CD8-positive, alpha-beta T cell (primary cell): ENCODE measurements at regions of chr22 and their contacts with region 1.

Region 1: DNA sequence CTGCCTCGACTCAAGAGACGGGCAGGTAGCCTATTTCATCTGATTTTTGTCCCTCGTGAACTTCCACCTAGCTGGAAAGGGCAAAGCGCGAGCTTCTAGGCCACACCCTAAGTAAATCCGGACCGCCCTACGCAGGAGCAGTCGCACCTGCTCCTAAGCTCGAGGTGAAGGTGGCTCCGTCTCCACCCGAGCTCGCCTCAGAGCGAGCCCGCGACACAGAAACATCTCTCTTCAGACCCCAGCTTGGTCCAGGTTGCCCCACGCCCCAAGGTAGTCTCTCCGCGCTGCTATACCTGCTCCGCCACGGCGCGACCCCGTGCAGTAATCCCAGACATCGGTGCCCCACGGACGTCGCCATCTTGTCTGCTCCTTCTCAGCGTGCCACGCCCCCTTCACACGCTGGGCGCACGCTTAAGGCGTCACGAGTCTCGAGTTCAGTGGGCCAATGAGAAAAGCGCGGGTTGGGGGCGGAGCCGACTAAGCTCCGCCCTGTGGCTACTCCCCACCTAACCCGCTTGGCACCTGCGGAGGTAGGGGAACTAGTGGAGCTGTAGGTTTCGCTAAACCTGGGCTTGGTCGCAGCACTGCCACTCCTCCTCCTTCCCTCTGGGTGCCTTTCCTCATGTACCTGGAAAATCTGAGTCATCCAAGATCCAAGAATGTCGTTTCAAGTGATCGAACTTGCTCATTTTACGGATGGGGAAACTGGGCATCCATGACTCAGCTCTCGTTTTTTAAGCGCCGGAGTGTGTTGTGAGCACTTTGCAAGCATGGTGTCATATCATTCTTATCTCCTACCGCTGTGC is at the start of gene PISD:
- DNase-seq: peak; percentile 94 to 98 (median 97)
- ATAC-seq: peak; percentile 94
- H3K4me3 ChIP-seq: peak within 1 kb of the TSS; percentile 89 to 97
- H3K4me3 Mint-ChIP-seq: peak within 1 kb of the TSS; percentile 96
- H3K27ac ChIP-seq: peak within 1 kb of the TSS; percentile 73 to 79
- H3K27ac Mint-ChIP-seq: peak within 1 kb of the TSS; percentile 96
- H3K4me1 ChIP-seq: peaks cover 18% of the 10 kb centered on the region
- H3K4me1 Mint-ChIP-seq: peaks cover 41% of the 10 kb centered on the region
- H3K27me3 ChIP-seq: no peaks in the 10 kb centered on the region
- H3K27me3 Mint-ChIP-seq: no peaks in the 10 kb centered on the region
- CTCF ChIP-seq: no peak
- total RNA-seq, gene PISD: 41.2 to 43.6 TPM

Region 2: DNA sequence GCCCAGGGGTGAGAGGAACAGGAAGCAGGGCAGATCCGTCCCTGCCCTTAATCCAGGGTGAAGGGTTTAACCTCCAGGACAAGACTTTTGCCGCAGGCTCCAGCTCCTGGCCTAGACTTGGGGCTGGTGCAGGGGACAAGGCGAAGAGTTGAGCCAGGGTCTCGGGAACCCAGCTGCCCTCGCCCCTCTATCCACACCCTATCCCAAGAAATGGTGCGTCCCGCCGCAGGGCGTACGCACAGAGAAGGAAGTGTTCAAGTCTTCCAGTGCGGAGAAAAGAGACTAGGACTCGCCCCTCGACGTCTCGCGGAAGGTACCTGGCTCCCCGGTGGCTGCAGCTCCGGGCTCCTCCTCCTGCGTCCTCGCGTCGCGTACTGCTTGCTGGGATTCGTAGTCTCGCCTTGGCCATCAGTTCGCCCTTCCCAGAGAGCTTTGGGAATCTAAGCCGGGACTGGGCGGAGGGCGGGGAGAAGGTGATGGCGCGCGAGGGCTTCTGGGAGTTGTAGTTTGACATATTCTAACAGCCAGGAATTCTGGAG is 1895.4 kb before region 1 on chr22 and contains the start of gene ZMAT5:
- CTCF ChIA-PET with region 1: no interaction called
- POLR2A ChIA-PET with region 1: no interaction called
- intact Hi-C with region 1: loop called in 1 of 2 experiments (anchors 10 kb)
- DNase-seq: peak; percentile 77 to 97 (median 92)
- ATAC-seq: peak; percentile 94
- H3K4me3 ChIP-seq: peak within 1 kb of the TSS; percentile 83 to 95
- H3K4me3 Mint-ChIP-seq: peak within 1 kb of the TSS; percentile 100
- H3K27ac ChIP-seq: peak within 1 kb of the TSS; percentile 72 to 84
- H3K27ac Mint-ChIP-seq: peak within 1 kb of the TSS; percentile 98
- H3K4me1 ChIP-seq: peaks cover 23% of the 10 kb centered on the region
- H3K4me1 Mint-ChIP-seq: peaks cover 41% of the 10 kb centered on the region
- H3K27me3 ChIP-seq: no peaks in the 10 kb centered on the region
- H3K27me3 Mint-ChIP-seq: no peaks in the 10 kb centered on the region
- CTCF ChIP-seq: no peak
- total RNA-seq, gene ZMAT5: 4.3 to 5.2 TPM

Region 3: DNA sequence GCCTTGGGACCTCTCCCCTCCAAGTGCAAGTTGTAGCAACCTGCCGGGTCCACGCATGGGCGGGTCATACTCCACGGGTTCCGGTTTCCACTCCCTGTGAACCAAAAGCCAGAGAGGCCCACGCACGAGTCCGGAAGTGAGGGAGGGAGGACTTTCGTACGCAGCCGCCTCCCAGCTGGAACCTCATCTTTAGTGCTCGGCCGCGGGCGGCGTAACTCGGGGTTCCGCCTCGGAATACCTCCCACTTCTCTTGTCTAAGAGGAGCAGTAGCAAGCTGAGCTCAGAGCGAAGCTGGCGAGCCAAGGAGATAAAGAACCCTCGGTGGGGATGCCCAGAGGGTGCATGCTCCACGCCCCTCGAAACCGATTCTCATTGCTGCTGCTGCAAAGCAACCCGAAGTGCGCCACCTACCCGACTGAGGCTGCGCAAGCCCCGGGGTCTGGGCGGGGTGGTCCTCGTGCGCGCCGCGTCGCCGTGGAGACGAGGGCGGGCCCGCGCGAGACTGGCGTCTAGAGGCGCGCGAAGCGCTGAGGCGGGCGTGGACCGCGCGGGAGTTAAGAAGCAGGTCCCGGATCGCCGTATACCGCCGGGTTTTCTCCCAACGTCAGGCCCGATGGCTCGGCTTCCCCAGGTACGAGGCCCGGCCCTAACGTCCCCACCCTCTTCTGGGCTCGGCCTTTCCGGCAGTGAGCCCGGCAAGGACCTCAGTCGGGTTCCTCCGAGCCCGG is 165.9 kb before region 1 on chr22 and contains the start of gene SFI1:
- CTCF ChIA-PET with region 1: interaction called, 5 read pairs
- POLR2A ChIA-PET with region 1: interaction called, 3 read pairs
- intact Hi-C with region 1: loop called in 1 of 2 experiments (anchors 10 kb)
- DNase-seq: peak; percentile 93 to 98 (median 96)
- ATAC-seq: peak; percentile 83
- H3K4me3 ChIP-seq: peak within 1 kb of the TSS; percentile 83 to 91
- H3K4me3 Mint-ChIP-seq: peak within 1 kb of the TSS; percentile 95
- H3K27ac ChIP-seq: peak within 1 kb of the TSS; percentile 87 to 90
- H3K27ac Mint-ChIP-seq: peak within 1 kb of the TSS; percentile 99
- H3K4me1 ChIP-seq: peaks cover 27% of the 10 kb centered on the region
- H3K4me1 Mint-ChIP-seq: peaks cover 45% of the 10 kb centered on the region
- H3K27me3 ChIP-seq: no peaks in the 10 kb centered on the region
- H3K27me3 Mint-ChIP-seq: no peaks in the 10 kb centered on the region
- CTCF ChIP-seq: no peak
- total RNA-seq, gene SFI1: 217 to 235 TPM

Region 4: GRCh38 chr22:31520051-31520450 is 142.0 kb before region 1 on chr22:
- CTCF ChIA-PET with region 1: no interaction called
- POLR2A ChIA-PET with region 1: no interaction called
- intact Hi-C with region 1: no loop called
- DNase-seq: no peak
- ATAC-seq: no peak
- H3K4me3 ChIP-seq: no peak overlapping the region
- H3K4me3 Mint-ChIP-seq: no peak overlapping the region
- H3K27ac ChIP-seq: no peak overlapping the region
- H3K27ac Mint-ChIP-seq: peak overlapping the region; percentile 77
- H3K4me1 ChIP-seq: peaks cover 3% of the 10 kb centered on the region
- H3K4me1 Mint-ChIP-seq: peaks cover 59% of the 10 kb centered on the region
- H3K27me3 ChIP-seq: no peaks in the 10 kb centered on the region
- H3K27me3 Mint-ChIP-seq: no peaks in the 10 kb centered on the region
- CTCF ChIP-seq: no peak

Region 5: GRCh38 chr22:31676700-31677099 is 14.6 kb after region 1 on chr22:
- CTCF ChIA-PET with region 1: interaction called, 48 read pairs
- POLR2A ChIA-PET with region 1: interaction called, 30 read pairs
- intact Hi-C with region 1: loop called (anchors 1 kb)
- DNase-seq: peak; percentile 82 to 95 (median 91)
- ATAC-seq: peak; percentile 100
- H3K4me3 ChIP-seq: peak overlapping the region; percentile 61 to 77
- H3K4me3 Mint-ChIP-seq: peak overlapping the region; percentile 90
- H3K27ac ChIP-seq: peak overlapping the region; percentile 80 to 83
- H3K27ac Mint-ChIP-seq: peak overlapping the region; percentile 94
- H3K4me1 ChIP-seq: peaks cover 4% of the 10 kb centered on the region
- H3K4me1 Mint-ChIP-seq: peaks cover 11% of the 10 kb centered on the region
- H3K27me3 ChIP-seq: no peaks in the 10 kb centered on the region
- H3K27me3 Mint-ChIP-seq: no peaks in the 10 kb centered on the region
- CTCF ChIP-seq: no peak

Region 6: GRCh38 chr22:31943976-31944699 is 282.1 kb after region 1 on chr22 and contains the start of gene YWHAH:
- CTCF ChIA-PET with region 1: interaction called, 15 read pairs
- POLR2A ChIA-PET with region 1: interaction called, 4 read pairs
- intact Hi-C with region 1: loop called (anchors 1 kb)
- DNase-seq: peak; percentile 71 to 91 (median 84)
- ATAC-seq: peak; percentile 65
- H3K4me3 ChIP-seq: peak within 1 kb of the TSS; percentile 64 to 69
- H3K4me3 Mint-ChIP-seq: peak within 1 kb of the TSS; percentile 92
- H3K27ac ChIP-seq: peak within 1 kb of the TSS; percentile 62 to 85
- H3K27ac Mint-ChIP-seq: peak within 1 kb of the TSS; percentile 90
- H3K4me1 ChIP-seq: peaks cover 17% of the 10 kb centered on the region
- H3K4me1 Mint-ChIP-seq: peaks cover 12% of the 10 kb centered on the region
- H3K27me3 ChIP-seq: no peaks in the 10 kb centered on the region
- H3K27me3 Mint-ChIP-seq: no peaks in the 10 kb centered on the region
- CTCF ChIP-seq: no peak
- total RNA-seq, gene YWHAH: 22.4 to 24.3 TPM

Region 7: GRCh38 chr22:32080904-32081303 is 418.9 kb after region 1 on chr22:
- CTCF ChIA-PET with region 1: no interaction called
- POLR2A ChIA-PET with region 1: no interaction called
- intact Hi-C with region 1: loop called in 1 of 2 experiments (anchors 5 kb)
- DNase-seq: peak in 3 of 9 experiments; percentile 16 to 59 (median 50)
- ATAC-seq: peak; percentile 55
- H3K4me3 ChIP-seq: no peak overlapping the region
- H3K4me3 Mint-ChIP-seq: no peak overlapping the region
- H3K27ac ChIP-seq: no peak overlapping the region
- H3K27ac Mint-ChIP-seq: no peak overlapping the region
- H3K4me1 ChIP-seq: no peaks in the 10 kb centered on the region
- H3K4me1 Mint-ChIP-seq: no peaks in the 10 kb centered on the region
- H3K27me3 ChIP-seq: no peaks in the 10 kb centered on the region
- H3K27me3 Mint-ChIP-seq: peaks cover 10% of the 10 kb centered on the region
- CTCF ChIP-seq: peak; percentile 37